Activated CD8-positive, alpha-beta T cell treated with anti-CD3 and anti-CD28 coated beads, Interleukin-2, amount 10 ng/mL, durations not matched to agents 7 days and 5 days (primary cell): ENCODE measurements at regions of chr12 and their contacts with region 1.

Region 1: GRCh38 chr12:57462251-57462911 is 2.8 kb downstream of the GLI1 start:
- DNase-seq: peak; percentile 94
- ATAC-seq: peak; percentile 78
- H3K4me3 Mint-ChIP-seq: peak overlapping the region; percentile 83
- H3K27ac Mint-ChIP-seq: peak overlapping the region; percentile 80
- H3K4me1 Mint-ChIP-seq: peaks cover 63% of the 10 kb centered on the region
- H3K27me3 Mint-ChIP-seq: peaks cover 9% of the 10 kb centered on the region

Region 2: GRCh38 chr12:57238854-57239554 is 223.4 kb before region 1 on chr12:
- CTCF ChIA-PET with region 1: interaction called, 31 read pairs
- POLR2A ChIA-PET with region 1: no interaction called
- DNase-seq: peak; percentile 90
- ATAC-seq: peak; percentile 64
- H3K4me3 Mint-ChIP-seq: peak overlapping the region; percentile 83
- H3K27ac Mint-ChIP-seq: peak overlapping the region; percentile 40
- H3K4me1 Mint-ChIP-seq: peaks cover 91% of the 10 kb centered on the region
- H3K27me3 Mint-ChIP-seq: peaks cover 43% of the 10 kb centered on the region

Region 3: GRCh38 chr12:57309420-57309819 is 153.0 kb before region 1 on chr12:
- CTCF ChIA-PET with region 1: interaction called, 19 read pairs
- POLR2A ChIA-PET with region 1: no interaction called
- DNase-seq: no peak
- ATAC-seq: no peak
- H3K4me3 Mint-ChIP-seq: no peak overlapping the region
- H3K27ac Mint-ChIP-seq: no peak overlapping the region
- H3K4me1 Mint-ChIP-seq: peaks cover 10% of the 10 kb centered on the region
- H3K27me3 Mint-ChIP-seq: no peaks in the 10 kb centered on the region

Region 4: DNA sequence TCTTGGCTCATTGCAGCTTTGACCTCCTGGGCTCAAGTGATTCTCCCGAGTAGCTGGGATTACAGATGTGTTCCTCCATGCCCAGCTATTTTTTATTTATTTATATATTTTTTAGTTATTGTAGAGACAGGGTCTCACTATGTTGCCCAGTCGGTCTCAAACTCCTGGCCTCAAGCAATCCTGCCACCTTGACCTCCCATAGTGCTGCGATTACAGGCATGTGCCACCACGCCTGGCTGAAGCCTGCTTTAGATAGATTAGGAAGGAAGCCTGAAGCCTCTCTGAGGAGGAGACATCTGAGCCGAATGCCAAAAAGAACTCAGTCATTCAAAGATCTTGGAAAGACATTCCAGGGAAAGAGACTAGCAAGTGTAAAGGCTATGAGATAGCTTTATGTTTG is 17.6 kb before region 1 on chr12:
- CTCF ChIA-PET with region 1: interaction called, 40 read pairs
- POLR2A ChIA-PET with region 1: interaction called, 5 read pairs
- DNase-seq: no peak
- ATAC-seq: no peak
- H3K4me3 Mint-ChIP-seq: no peak overlapping the region
- H3K27ac Mint-ChIP-seq: no peak overlapping the region
- H3K4me1 Mint-ChIP-seq: no peaks in the 10 kb centered on the region
- H3K27me3 Mint-ChIP-seq: peaks cover 6% of the 10 kb centered on the region

Region 5: GRCh38 chr12:57520053-57520871 is 57.9 kb after region 1 on chr12 and contains the start of gene DDIT3:
- CTCF ChIA-PET with region 1: interaction called, 15 read pairs
- POLR2A ChIA-PET with region 1: interaction called, 6 read pairs
- DNase-seq: peak; percentile 99
- ATAC-seq: peak; percentile 75
- H3K4me3 Mint-ChIP-seq: peak within 1 kb of the TSS; percentile 86
- H3K27ac Mint-ChIP-seq: peak within 1 kb of the TSS; percentile 100
- H3K4me1 Mint-ChIP-seq: peaks cover 60% of the 10 kb centered on the region
- H3K27me3 Mint-ChIP-seq: no peaks in the 10 kb centered on the region
- total RNA-seq, gene DDIT3: 14.9 to 15.0 TPM

Region 6: DNA sequence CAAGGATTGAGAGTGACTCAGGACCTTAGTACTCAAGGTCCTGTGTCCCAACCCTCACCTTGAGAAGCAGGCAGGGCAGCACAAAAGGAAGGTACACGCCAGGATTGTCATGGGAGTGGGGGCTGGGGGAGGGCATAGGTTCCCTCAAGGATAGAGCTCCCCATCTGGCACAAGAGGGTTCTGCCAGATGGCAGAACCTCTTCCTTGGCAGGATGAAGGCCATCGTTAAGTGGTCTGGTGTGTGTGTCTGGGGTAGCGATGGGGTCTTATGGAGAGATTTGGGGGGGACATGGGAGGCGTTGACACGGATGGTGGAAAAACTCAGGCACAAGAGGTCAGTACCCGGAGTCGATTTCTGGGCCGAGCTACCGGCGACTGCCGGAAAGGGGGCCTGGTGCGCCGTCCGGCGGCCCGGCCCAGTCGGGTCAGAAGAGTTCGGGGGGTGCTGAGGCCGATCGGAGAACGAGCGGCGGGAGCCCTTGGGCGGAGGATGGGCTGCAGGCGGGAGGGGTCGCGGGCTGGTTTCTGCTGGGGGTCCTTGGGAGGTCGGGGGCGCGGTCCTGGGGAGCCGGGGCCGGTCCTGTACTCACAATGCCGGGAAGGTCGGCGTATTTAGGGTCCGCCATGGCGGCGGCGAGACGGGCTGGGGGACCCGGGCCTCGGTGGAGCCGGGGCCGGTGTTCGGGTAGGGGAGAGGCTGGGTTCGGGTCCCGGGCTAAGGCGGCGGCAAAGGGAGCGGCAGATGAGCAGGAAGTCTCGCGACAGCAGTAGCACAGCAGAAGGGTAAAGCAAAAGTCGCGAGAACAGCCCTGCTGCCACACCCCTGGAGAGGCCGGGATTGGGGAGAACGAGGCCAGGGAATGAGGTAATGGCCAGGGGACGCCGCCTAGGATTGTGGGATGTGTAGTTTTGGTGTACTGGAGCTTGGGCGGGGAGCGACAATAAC is 84.3 kb after region 1 on chr12 and contains the start of gene DCTN2:
- CTCF ChIA-PET with region 1: interaction called, 10 read pairs
- POLR2A ChIA-PET with region 1: no interaction called
- DNase-seq: peak; percentile 98
- ATAC-seq: peak; percentile 98
- H3K4me3 Mint-ChIP-seq: peak within 1 kb of the TSS; percentile 100
- H3K27ac Mint-ChIP-seq: peak within 1 kb of the TSS; percentile 97
- H3K4me1 Mint-ChIP-seq: peaks cover 53% of the 10 kb centered on the region
- H3K27me3 Mint-ChIP-seq: peaks cover 9% of the 10 kb centered on the region
- total RNA-seq, gene DCTN2: 89.3 to 96.5 TPM